Aorta (tissue), 5 donors: ENCODE measurements at regions of chr5 and their contacts with region 1.

Region 1: GRCh38 chr5:180291943-180292831 is at the start of gene MAPK9:
- DNase-seq: peak; percentile 89 to 94
- ATAC-seq: peak; percentile 93
- H3K4me3 ChIP-seq: peak within 1 kb of the TSS; percentile 94 to 96
- H3K27ac ChIP-seq: peak within 1 kb of the TSS; percentile 48 to 81
- H3K4me1 ChIP-seq: no peaks in the 10 kb centered on the region
- H3K27me3 ChIP-seq: no peaks in the 10 kb centered on the region
- total RNA-seq, gene MAPK9: 31.4 to 36.4 TPM

Region 2: GRCh38 chr5:180328296-180329137 is 36.3 kb after region 1 on chr5:
- intact Hi-C with region 1: loop called in 1 of 2 experiments (anchors 5 kb)
- DNase-seq: peak; percentile 88 to 94
- ATAC-seq: peak; percentile 53
- H3K4me3 ChIP-seq: no peak overlapping the region
- H3K27ac ChIP-seq: no peak overlapping the region
- H3K4me1 ChIP-seq: no peaks in the 10 kb centered on the region
- H3K27me3 ChIP-seq: no peaks in the 10 kb centered on the region

Region 3: DNA sequence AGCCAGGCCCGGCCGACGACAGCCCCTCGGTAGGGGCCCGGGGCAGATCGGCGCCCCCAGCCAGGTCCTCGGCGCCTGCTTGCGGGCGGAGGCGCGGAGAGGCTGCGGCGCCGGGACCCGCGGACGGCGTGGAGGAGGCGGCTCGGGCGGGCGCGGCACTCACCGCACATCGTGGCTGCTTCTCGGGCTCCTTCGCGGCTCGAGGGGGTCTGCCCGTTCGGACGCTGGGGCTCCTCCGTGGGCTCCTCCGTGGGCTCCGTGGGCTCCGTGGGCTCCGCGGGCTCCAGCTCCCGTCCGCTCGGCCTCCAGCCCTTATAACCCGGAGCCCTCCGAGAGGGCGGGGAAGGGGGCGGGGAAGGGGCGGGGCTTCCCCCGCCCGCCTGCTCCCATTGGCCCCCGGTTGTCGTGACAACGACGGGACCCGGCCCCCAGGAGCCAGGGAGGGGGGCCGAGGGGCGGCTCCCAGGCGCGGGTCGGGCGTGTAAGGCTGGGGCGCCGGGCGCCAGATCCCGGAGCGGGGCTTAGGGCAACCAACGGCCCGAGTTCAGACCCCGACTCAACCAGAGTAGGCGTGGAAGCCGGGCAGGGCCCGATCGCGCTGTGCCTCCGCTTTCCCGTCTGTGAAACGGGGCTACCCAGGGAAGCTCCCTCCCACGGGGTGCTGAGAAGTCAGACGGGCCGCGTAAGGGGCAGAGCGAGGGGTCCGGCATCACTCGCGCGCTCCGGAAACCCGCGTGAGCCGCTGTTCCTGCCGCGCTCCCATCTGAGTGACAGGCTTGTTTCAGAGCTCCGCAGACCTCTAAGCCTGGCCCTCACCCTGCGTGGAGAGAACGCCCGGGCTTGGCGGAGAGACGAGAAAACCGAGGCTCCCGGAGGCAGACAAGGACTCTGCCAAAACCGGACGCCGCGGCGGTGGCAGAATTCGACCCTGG is 61.1 kb after region 1 on chr5 and contains the start of gene GFPT2:
- intact Hi-C with region 1: loop called in 1 of 2 experiments (anchors 2 kb)
- DNase-seq: peak; percentile 89 to 94
- ATAC-seq: peak; percentile 96
- H3K4me3 ChIP-seq: peak within 1 kb of the TSS; percentile 66 to 85
- H3K27ac ChIP-seq: no peak within 1 kb of the TSS
- H3K4me1 ChIP-seq: no peaks in the 10 kb centered on the region
- H3K27me3 ChIP-seq: no peaks in the 10 kb centered on the region
- total RNA-seq, gene GFPT2: 60.1 to 60.2 TPM

Region 4: DNA sequence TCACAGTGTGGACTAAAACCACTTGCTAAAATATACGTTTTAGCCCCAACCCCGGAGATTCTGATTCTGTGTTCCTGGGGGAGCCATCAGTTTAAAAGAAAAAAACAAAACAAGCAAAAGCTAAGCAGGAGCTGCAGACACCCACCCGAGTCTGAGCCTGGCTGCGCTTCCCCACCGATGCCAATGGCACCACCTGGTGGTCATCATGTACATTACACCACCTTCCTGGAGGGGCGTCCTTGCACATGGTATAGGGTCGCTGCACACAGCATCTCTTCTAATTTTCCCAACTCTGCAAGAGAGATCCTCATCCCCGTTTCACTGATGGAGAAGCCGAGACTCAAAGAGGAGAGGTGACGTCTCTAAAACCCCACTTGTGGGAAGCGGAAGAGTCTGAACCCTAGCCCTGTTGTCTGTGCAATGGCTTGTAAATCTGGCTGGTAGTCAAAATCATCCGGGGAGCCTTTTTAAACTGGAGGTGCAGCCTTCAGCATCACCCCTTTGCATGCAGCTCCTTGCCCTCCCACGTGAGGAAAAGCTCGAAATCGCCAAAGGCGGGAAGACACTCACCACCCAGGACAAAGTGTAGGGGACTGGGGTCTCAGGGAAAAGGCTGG is 178.9 kb after region 1 on chr5:
- intact Hi-C with region 1: loop called (anchors 2 kb)
- DNase-seq: peak; percentile 58 to 83
- ATAC-seq: peak; percentile 83
- H3K4me3 ChIP-seq: no peak overlapping the region
- H3K27ac ChIP-seq: no peak overlapping the region
- H3K4me1 ChIP-seq: no peaks in the 10 kb centered on the region
- H3K27me3 ChIP-seq: no peaks in the 10 kb centered on the region

Region 5: GRCh38 chr5:180494060-180494509 is 201.9 kb after region 1 on chr5 and contains the start of gene CNOT6:
- intact Hi-C with region 1: loop called in 1 of 2 experiments (anchors 5 kb)
- DNase-seq: peak; percentile 95 to 98
- ATAC-seq: peak; percentile 100
- H3K4me3 ChIP-seq: peak within 1 kb of the TSS; percentile 88 to 95
- H3K27ac ChIP-seq: peak within 1 kb of the TSS; percentile 18 to 94
- H3K4me1 ChIP-seq: peaks cover 2 to 4% of the 10 kb centered on the region in 2 donors
- H3K27me3 ChIP-seq: no peaks in the 10 kb centered on the region
- total RNA-seq, gene CNOT6: 16.4 to 17.6 TPM